IMR-90 (cell line): ENCODE measurements at regions of chr6 and their contacts with region 1.

Region 1: DNA sequence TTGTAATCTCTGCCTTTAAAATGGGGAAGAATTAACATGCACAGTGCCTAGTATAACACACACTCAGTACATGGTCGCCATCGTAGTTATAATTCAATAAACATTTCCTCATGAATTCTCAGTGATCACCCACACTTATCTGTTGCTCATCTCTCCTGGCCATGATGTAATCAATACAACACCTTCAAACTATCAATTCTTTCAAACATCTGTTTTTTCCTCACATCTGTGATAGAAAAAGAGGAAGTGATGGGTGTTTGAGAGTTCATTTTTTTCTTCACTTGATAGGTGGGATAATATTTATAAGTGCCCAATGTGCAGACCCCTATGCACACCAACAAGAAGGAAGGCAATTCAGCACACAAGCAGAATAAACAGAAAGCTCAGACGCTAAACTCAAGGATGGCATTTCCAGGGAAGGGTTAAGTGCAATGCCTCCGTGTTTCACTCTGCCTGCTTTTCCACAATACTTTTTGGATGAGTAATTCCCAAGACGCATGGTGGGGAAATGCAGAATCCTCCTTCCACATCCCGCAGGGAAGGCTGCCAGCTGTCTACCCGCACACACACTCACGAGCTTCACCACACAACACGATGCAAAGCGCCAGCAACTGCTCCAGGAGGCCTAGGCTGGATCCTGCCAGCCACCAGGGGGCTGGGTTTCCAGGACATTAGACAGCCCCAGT is 100.3 kb downstream of the GMPR start:
- DNase-seq: peak; percentile 100
- ATAC-seq: peak; percentile 84
- H3K4me3 ChIP-seq: no peak overlapping the region
- H3K27ac ChIP-seq: peak overlapping the region; percentile 49
- H3K4me1 ChIP-seq: peaks cover 21% of the 10 kb centered on the region
- H3K27me3 ChIP-seq: no peaks in the 10 kb centered on the region
- CTCF ChIP-seq: peak; percentile 88
- POLR2A ChIP-seq: no peak
- RAD21 ChIP-seq: peak; percentile 76

Region 2: GRCh38 chr6:16292432-16292831 is 46.3 kb before region 1 on chr6:
- CTCF ChIA-PET with region 1: no interaction called
- POLR2A ChIA-PET with region 1: no interaction called
- dilution Hi-C with region 1: no loop called
- in situ Hi-C with region 1: no loop called
- intact Hi-C with region 1: no loop called
- DNase-seq: no peak
- ATAC-seq: no peak
- H3K4me3 ChIP-seq: no peak overlapping the region
- H3K27ac ChIP-seq: no peak overlapping the region
- H3K4me1 ChIP-seq: no peaks in the 10 kb centered on the region
- H3K27me3 ChIP-seq: no peaks in the 10 kb centered on the region
- CTCF ChIP-seq: no peak
- POLR2A ChIP-seq: no peak
- RAD21 ChIP-seq: no peak

Region 3: GRCh38 chr6:16398587-16398986 is 59.9 kb after region 1 on chr6:
- CTCF ChIA-PET with region 1: no interaction called
- POLR2A ChIA-PET with region 1: no interaction called
- dilution Hi-C with region 1: no loop called
- in situ Hi-C with region 1: no loop called
- intact Hi-C with region 1: loop called (anchors 2 kb)
- DNase-seq: peak; percentile 78
- ATAC-seq: peak; percentile 37
- H3K4me3 ChIP-seq: no peak overlapping the region
- H3K27ac ChIP-seq: peak overlapping the region; percentile 96
- H3K4me1 ChIP-seq: peaks cover 36% of the 10 kb centered on the region
- H3K27me3 ChIP-seq: no peaks in the 10 kb centered on the region
- CTCF ChIP-seq: no peak
- POLR2A ChIP-seq: no peak
- RAD21 ChIP-seq: no peak

Region 4: DNA sequence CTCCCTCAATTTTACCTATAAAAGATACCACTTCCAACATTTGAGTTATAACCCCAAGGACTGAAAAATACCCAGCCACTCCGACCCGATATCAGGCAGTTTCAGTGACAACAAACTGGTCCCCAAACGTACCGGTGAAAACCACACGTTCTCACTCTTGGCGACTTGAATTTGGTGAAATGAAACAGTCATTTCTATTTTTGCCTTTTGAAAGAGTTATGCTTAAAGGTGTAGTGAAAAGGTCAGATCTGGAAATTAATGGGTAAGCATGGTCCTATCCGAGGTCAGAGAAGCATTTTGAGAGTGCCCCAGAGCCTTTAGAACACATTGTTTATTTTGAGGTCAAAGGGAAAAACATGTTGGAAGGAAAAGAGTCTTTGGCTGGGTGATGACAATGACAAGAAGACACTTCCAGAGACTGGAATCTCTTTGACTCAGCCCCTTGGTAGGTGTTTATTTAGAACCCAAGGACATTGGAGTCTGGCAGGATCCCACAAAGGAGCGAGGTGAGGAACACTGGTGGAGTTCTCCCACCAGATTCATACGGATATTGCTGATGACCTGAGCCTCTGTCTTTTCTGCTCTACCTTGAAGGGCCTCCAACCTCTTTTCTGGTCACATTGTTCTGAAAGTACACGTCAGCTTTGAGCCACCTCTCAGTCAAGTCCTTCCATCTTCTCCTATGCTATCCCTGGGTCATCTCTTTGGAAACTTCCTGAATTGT is 134.6 kb after region 1 on chr6:
- CTCF ChIA-PET with region 1: no interaction called
- POLR2A ChIA-PET with region 1: no interaction called
- dilution Hi-C with region 1: no loop called
- in situ Hi-C with region 1: no loop called
- intact Hi-C with region 1: loop called (anchors 2 kb)
- DNase-seq: no peak
- ATAC-seq: no peak
- H3K4me3 ChIP-seq: no peak overlapping the region
- H3K27ac ChIP-seq: peak overlapping the region; percentile 98; the same call in 1 of the 2 replicates
- H3K4me1 ChIP-seq: peaks cover 23% of the 10 kb centered on the region
- H3K27me3 ChIP-seq: no peaks in the 10 kb centered on the region
- CTCF ChIP-seq: no peak
- POLR2A ChIP-seq: no peak
- RAD21 ChIP-seq: no peak

Region 5: DNA sequence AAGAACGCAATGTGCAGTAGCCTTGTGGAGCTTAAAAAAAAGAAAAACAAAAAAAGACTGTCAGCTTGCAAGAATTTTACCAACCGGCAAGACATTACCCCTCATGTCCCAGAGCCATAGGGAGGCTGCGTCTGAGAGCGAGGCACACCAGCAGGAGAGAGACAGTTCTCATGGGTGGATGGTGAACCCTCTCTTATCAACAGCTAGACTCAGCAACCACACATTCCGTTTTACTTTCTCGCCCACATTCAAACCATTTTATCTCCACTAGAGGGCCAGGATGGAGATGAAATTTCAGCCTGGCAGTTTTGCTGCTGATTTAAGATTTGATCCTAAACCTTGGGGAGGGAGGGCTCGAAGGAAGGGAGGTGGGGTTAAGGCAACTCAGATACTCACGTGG is 175.5 kb after region 1 on chr6:
- CTCF ChIA-PET with region 1: no interaction called
- POLR2A ChIA-PET with region 1: no interaction called
- dilution Hi-C with region 1: no loop called
- in situ Hi-C with region 1: loop called (anchors 5 kb)
- intact Hi-C with region 1: loop called (anchors 5 kb)
- DNase-seq: peak; percentile 76
- ATAC-seq: peak; percentile 76
- H3K4me3 ChIP-seq: no peak overlapping the region
- H3K27ac ChIP-seq: no peak overlapping the region
- H3K4me1 ChIP-seq: peaks cover 5% of the 10 kb centered on the region; the same call in 1 of the 2 replicates
- H3K27me3 ChIP-seq: no peaks in the 10 kb centered on the region
- CTCF ChIP-seq: peak; percentile 66
- POLR2A ChIP-seq: no peak
- RAD21 ChIP-seq: peak; percentile 77

Region 6: DNA sequence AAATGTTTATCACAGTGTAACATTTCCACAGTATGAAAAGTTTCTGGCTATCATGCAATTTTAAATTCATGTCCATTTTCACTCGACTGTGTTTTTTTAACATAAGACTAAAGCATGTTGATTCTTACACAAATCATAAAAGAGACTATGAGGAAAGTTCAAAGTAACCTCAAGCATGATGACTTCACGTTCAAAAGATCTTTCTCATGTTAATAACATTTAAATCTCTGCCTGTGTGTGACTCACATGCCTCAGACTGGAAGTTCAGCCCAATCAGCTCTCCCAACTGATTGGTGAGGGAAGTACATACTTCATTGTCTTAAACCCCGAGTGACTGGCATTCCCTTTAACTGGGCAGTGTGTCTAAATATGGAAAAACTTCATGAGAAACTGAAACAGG is 385.1 kb after region 1 on chr6:
- CTCF ChIA-PET with region 1: no interaction called
- POLR2A ChIA-PET with region 1: interaction called, 3 read pairs
- dilution Hi-C with region 1: no loop called
- in situ Hi-C with region 1: no loop called
- intact Hi-C with region 1: loop called (anchors 2 kb)
- DNase-seq: peak; percentile 96
- ATAC-seq: peak; percentile 73
- H3K4me3 ChIP-seq: no peak overlapping the region
- H3K27ac ChIP-seq: peak overlapping the region; percentile 66; the same call in 1 of the 2 replicates
- H3K4me1 ChIP-seq: peaks cover 19% of the 10 kb centered on the region
- H3K27me3 ChIP-seq: no peaks in the 10 kb centered on the region
- CTCF ChIP-seq: no peak
- POLR2A ChIP-seq: no peak
- RAD21 ChIP-seq: no peak; the same call in 1 of the 2 replicates